Activated naive CD4-positive, alpha-beta T cell treated with anti-CD3 and anti-CD28 coated beads, Interleukin-2, amount 10 ng/mL, durations not matched to agents 7 days and 5 days (primary cell): ENCODE measurements at regions of chr10 and their contacts with region 1.

Region 1: GRCh38 chr10:8319704-8320103 is 265.2 kb downstream of the GATA3 start:
- DNase-seq: no peak
- H3K4me3 Mint-ChIP-seq: no peak overlapping the region
- H3K27ac Mint-ChIP-seq: no peak overlapping the region
- H3K4me1 Mint-ChIP-seq: peaks cover 14% of the 10 kb centered on the region
- H3K27me3 Mint-ChIP-seq: peaks cover 19% of the 10 kb centered on the region

Region 2: DNA sequence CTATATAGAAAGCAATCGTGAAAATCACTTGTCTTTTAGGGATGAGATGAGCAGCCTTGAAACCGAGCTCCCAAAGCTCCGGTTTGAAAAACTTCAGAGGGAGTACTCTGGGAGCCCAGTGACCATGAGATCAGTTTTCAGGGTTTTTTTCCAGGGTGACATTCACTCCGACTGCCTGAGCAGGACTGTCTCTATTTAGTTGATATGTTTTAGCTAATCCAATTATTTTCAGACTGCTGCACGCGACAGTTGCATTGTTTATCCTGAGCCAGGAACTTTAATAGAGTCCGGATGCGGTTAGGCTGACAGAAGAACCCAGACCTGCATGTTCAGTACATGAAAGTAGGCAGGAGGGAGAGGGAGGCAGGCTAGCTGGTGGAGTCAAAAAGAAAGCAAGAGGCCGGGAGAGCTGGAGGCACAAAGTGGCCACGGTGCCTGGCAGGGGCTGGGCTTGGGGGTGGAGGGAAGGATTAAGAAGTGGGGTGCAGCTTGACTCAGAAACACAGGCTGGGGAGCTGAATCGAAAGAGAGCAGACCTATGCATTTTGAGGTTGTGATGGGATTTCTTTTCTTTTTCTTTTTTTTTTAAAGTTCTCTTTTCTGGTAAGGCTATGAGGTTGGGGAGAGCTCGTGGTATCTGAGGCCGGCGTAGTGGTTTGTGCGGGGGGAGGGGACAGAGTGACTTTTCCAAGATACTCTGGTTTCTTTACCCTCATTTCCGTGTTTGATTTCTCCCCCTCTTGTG is 259.6 kb before region 1 on chr10:
- CTCF ChIA-PET with region 1: interaction called, 13 read pairs
- DNase-seq: peak; percentile 85
- H3K4me3 Mint-ChIP-seq: peak overlapping the region; percentile 100
- H3K27ac Mint-ChIP-seq: peak overlapping the region; percentile 97
- H3K4me1 Mint-ChIP-seq: peaks cover 77% of the 10 kb centered on the region
- H3K27me3 Mint-ChIP-seq: no peaks in the 10 kb centered on the region